Activated CD4-positive, alpha-beta T cell treated with anti-CD3 and anti-CD28 coated beads, Interleukin-2, amount 10 ng/mL, durations not matched to agents 7 days and 5 days (primary cell): ENCODE measurements at regions of chr22 and their contacts with region 1.

Region 1: GRCh38 chr22:17785185-17786184 is 11.2 kb upstream of the BID start:
- DNase-seq: peak; percentile 74
- H3K4me3 Mint-ChIP-seq: no peak overlapping the region
- H3K27ac Mint-ChIP-seq: no peak overlapping the region
- H3K4me1 Mint-ChIP-seq: peaks cover 13% of the 10 kb centered on the region
- H3K27me3 Mint-ChIP-seq: no peaks in the 10 kb centered on the region

Region 2: GRCh38 chr22:17742527-17742902 is 43.0 kb before region 1 on chr22:
- CTCF ChIA-PET with region 1: interaction called, 37 read pairs
- POLR2A ChIA-PET with region 1: no interaction called
- DNase-seq: peak; percentile 73
- H3K4me3 Mint-ChIP-seq: no peak overlapping the region
- H3K27ac Mint-ChIP-seq: no peak overlapping the region
- H3K4me1 Mint-ChIP-seq: peaks cover 6% of the 10 kb centered on the region
- H3K27me3 Mint-ChIP-seq: no peaks in the 10 kb centered on the region

Region 3: GRCh38 chr22:17802822-17803221 is 17.3 kb after region 1 on chr22:
- CTCF ChIA-PET with region 1: interaction called, 12 read pairs
- POLR2A ChIA-PET with region 1: no interaction called
- DNase-seq: no peak
- H3K4me3 Mint-ChIP-seq: no peak overlapping the region
- H3K27ac Mint-ChIP-seq: no peak overlapping the region
- H3K4me1 Mint-ChIP-seq: peaks cover 6% of the 10 kb centered on the region
- H3K27me3 Mint-ChIP-seq: no peaks in the 10 kb centered on the region